ENCODE measurements at regions of chrX and their contacts with region 1.

Region 1: GRCh38 chrX:136028251-136028984 is 43.2 kb downstream of the SLC9A6 start:
- DNase-seq: no peak
- ATAC-seq: no peak
- H3K4me3 Mint-ChIP-seq: no peak overlapping the region
- H3K27ac Mint-ChIP-seq: no peak overlapping the region
- H3K4me1 Mint-ChIP-seq: no peaks in the 10 kb centered on the region
- H3K27me3 Mint-ChIP-seq: no peaks in the 10 kb centered on the region
- CTCF ChIP-seq: no peak

Region 2: DNA sequence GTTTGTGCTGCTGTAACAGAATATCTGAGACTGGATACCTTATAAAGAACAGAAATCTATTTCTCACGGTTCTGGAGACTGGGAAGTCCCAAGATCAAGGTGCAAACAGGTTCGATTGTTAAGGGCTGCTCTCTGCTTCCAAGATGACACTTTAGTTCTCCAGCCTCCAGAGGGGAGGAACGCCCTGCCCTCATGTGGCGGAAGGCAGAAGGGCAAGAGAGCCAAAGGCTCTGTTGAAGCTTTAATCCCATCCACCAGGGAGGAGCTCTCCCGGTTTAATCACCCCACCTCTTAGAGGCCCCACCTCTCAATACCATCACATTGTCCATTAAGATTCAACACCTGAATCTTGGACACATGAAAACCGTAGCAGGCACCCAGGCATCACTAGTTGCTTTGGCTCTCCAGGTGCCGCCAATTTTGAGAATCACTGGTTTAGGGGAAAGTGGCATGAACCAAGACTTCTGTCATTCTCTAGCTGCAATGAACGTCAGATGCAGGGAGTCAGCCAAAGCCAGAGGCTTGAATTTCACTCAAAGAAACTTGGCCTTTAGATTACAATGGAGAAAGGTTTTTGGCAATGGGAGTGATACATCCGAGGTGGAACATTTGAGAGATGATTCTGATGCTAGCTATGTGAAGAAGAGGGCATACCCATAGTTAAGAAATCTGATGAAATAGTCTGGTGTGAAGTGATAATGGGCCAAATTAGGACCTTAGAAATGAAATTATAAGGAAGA is 134.6 kb after region 1 on chrX:
- CTCF ChIA-PET with region 1: interaction called, 52 read pairs
- POLR2A ChIA-PET with region 1: no interaction called
- DNase-seq: peak; percentile 63
- ATAC-seq: peak; percentile 95
- H3K4me3 Mint-ChIP-seq: no peak overlapping the region
- H3K27ac Mint-ChIP-seq: peak overlapping the region; percentile 28; the same call in 1 of the 2 replicates
- H3K4me1 Mint-ChIP-seq: peaks cover 35% of the 10 kb centered on the region
- H3K27me3 Mint-ChIP-seq: no peaks in the 10 kb centered on the region
- CTCF ChIP-seq: peak; percentile 31; the same call in 1 of the 2 replicates

Region 3: DNA sequence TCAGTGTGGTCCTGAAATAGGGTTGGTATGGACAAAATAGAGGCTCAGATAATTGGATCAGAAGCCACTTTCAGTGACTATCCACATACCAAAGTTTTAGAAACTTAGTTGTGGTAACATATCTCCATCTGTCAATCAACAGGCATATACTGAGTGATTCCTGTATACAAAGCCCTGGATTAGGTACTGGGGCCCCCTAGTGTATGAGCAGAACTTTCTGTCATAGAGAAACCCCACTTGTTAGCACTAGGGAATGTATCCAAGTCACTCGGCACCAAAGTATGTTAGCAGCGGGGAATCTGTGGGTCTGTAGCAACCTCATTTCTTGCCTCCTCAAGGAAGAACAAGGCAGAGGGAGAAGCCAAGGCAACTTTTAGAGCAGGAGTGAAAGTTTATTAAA is 172.0 kb after region 1 on chrX:
- CTCF ChIA-PET with region 1: interaction called, 15 read pairs
- POLR2A ChIA-PET with region 1: no interaction called
- DNase-seq: no peak
- ATAC-seq: peak; percentile 85
- H3K4me3 Mint-ChIP-seq: no peak overlapping the region
- H3K27ac Mint-ChIP-seq: no peak overlapping the region
- H3K4me1 Mint-ChIP-seq: peaks cover 26% of the 10 kb centered on the region
- H3K27me3 Mint-ChIP-seq: no peaks in the 10 kb centered on the region
- CTCF ChIP-seq: no peak

Region 4: GRCh38 chrX:136209016-136209738 is 180.8 kb after region 1 on chrX:
- CTCF ChIA-PET with region 1: interaction called, 27 read pairs
- POLR2A ChIA-PET with region 1: no interaction called
- DNase-seq: peak; percentile 31
- ATAC-seq: peak; percentile 63
- H3K4me3 Mint-ChIP-seq: no peak overlapping the region
- H3K27ac Mint-ChIP-seq: no peak overlapping the region; the same call in 1 of the 2 replicates
- H3K4me1 Mint-ChIP-seq: peaks cover 17% of the 10 kb centered on the region
- H3K27me3 Mint-ChIP-seq: no peaks in the 10 kb centered on the region
- CTCF ChIP-seq: 0 out of 2 replicates have a peak, but pooled peaks have one; percentile 20

Measured in WTC11 (cell line).